Breast epithelium (tissue), 4 donors: ENCODE measurements at regions of chr16 and their contacts with region 1.

Region 1: GRCh38 chr16:81096718-81097208 is 568 bp upstream of the GCSH start:
- DNase-seq: no peak
- H3K4me3 ChIP-seq: peak overlapping the region; percentile 73 to 96 (median 83)
- H3K27ac ChIP-seq: peak overlapping the region; percentile 68 to 89
- H3K4me1 ChIP-seq: no peaks in the 10 kb centered on the region
- H3K27me3 ChIP-seq: no peaks in the 10 kb centered on the region
- CTCF ChIP-seq: no peak
- POLR2A ChIP-seq: no peak

Region 2: DNA sequence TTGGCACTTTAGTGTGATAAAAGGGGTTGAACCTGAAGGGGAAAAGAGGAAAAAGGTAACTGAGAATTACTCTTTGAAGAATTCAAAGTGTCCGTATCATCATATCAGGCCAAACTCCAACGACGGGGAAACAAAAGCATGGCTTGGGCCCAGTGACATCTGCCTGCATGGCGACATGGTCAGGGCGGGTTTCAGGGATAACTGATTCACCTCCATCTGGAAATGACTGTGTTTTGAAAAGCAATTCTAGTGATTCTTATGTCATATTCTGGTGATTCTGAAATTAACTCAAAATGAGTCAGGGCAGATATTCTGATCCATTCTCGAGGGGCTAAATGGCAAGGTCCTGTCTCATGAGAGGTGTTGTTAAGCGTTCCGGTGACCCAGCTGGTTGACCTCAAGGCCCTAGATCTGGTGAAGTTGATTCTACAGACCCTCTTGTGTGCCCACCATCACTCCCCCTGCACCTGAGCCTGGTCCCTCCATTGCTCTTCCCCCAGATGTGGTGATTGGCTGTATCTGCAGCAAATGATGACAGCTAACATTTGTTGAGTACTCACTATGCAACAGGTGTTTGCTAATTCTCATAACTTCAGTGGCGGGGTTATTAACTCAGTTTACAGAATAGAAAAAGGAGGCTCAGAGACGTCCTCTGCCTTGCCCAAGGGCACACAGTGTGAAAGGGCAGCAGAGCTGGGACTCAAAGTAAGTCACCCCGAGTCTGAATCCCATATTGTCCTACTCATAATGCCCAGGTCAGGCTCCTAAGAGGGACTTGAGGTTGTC is 1748.0 kb before region 1 on chr16:
- intact Hi-C with region 1: no loop called
- DNase-seq: no peak
- H3K4me3 ChIP-seq: no peak overlapping the region
- H3K27ac ChIP-seq: no peak overlapping the region
- H3K4me1 ChIP-seq: no peaks in the 10 kb centered on the region
- H3K27me3 ChIP-seq: no peaks in the 10 kb centered on the region
- CTCF ChIP-seq: no peak
- POLR2A ChIP-seq: no peak

Region 3: DNA sequence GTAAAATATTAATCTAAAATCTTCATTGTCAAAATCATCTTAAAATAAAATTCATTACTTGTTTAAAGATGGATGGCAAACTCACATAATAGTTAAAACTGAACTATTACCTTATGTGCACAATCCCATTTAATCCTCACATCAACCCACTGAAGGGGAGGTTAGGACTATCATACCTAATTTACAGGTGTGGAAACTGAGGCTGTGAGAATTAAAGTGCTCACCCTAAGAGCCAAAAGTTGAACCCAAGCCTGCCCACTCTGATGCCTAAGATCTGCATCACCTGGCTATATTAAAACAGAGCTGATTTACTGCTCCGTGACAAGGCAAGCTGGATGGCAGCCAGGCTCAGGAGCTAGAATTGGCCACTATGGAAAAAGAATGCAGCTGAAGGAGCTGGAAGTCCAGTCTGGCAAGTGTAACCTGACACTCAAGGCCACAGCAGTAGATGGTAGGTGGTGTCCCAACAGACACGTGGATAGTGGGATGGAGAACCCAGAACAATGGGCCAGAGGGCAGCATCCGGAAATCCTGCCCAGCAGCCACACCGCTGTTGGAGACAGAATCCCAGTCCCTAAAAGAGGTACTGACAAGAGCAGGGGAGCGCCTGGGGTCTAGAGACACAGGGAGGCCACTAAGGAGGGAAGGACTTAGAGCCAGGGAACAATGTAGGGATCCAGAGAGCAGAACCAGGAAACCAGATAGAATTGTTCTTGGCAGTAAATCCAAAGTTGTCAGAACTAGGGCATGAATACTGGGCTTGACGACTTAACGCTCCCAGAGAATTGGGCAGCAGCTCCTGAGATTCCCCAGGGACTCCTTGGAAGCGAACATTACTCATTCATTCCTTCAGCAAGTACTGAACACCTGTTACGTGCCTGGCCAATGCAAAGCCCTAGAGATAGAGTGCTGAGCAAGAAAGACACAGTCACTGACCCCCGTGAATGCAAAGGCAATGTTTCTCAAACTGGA is 378.2 kb before region 1 on chr16:
- intact Hi-C with region 1: no loop called
- DNase-seq: peak; percentile 83 to 84
- H3K4me3 ChIP-seq: no peak overlapping the region
- H3K27ac ChIP-seq: peak overlapping the region; percentile 64 to 67
- H3K4me1 ChIP-seq: no peaks in the 10 kb centered on the region
- H3K27me3 ChIP-seq: no peaks in the 10 kb centered on the region
- CTCF ChIP-seq: no peak
- POLR2A ChIP-seq: no peak

Region 4: DNA sequence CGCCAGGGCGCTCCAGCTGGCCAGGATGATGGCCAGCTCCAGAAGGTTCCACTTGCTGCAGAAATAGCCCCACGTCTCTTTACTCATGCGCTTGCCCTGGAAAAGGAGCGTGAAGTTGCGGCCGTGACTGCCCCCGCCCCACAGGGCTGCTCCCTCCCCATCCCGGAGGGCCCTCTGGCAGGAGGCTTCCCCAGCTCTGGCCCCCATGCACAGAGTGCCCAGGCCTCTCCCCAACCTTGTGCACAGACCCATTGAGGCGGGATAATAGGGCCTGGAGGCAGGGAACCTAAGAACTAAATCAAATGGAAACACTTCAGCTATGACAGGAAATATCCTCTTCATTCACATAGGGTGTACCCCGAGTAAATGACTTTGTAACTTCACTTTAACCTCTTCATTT is 20.7 kb after region 1 on chr16:
- intact Hi-C with region 1: loop called (anchors 1 kb)
- DNase-seq: no peak
- H3K4me3 ChIP-seq: no peak overlapping the region
- H3K27ac ChIP-seq: no peak overlapping the region
- H3K4me1 ChIP-seq: no peaks in the 10 kb centered on the region
- H3K27me3 ChIP-seq: no peaks in the 10 kb centered on the region
- CTCF ChIP-seq: no peak
- POLR2A ChIP-seq: no peak